Activated CD8-positive, alpha-beta T cell treated with anti-CD3 and anti-CD28 coated beads, Interleukin-2, amount 10 ng/mL, durations not matched to agents 7 days and 5 days (primary cell): ENCODE measurements at regions of chr2 and their contacts with region 1.

Region 1: DNA sequence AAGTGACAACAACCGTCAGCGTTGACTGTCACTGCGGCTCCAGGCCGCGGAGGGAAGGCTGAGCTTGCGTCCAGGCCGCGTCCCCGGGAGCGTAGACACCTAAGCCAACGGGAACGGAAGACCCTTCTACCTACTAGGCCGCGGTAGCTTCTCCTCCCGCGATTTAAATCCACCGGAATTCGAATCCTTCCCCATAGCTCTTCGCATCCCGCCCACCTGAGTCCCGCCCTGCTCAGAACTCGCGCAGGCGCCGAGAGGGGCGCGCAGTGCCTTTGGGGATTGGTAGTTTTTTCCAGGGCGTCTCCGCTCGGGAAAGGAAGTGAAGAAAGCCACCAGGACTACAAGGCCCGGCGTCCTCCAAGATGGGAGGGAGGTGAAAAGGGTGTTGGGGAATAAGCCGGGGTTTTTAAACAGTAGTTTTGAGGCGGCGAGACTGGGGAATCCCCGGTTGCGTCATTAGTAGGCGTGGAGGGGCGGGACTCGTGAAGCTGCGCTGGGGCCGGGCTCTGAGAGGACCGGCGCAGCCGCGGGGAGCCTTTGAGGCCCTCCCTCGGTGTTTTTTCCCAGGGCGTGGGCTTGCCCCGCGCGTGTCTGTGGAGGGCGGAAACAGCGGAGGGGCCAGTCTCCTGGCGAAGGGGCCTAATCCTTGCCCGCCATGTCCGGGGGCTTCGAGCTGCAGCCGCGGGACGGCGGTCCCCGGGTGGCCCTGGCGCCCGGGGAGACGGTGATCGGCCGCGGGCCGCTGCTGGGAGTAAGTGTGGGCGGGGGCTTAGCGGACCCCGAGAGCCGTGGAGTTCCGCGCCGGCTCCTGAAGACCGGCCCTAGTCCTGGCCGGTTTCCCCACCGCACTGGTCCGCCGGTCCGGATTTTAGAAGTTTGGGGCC is at the starts of genes APLF and FBXO48:
- DNase-seq: peak; percentile 99
- ATAC-seq: peak; percentile 94
- H3K4me3 Mint-ChIP-seq: peak within 1 kb of the TSS; percentile 98
- H3K27ac Mint-ChIP-seq: peak within 1 kb of the TSS; percentile 92
- H3K4me1 Mint-ChIP-seq: peaks cover 34% of the 10 kb centered on the region
- H3K27me3 Mint-ChIP-seq: peaks cover 2% of the 10 kb centered on the region
- total RNA-seq, gene APLF: 2.2 to 2.6 TPM
- total RNA-seq, gene FBXO48: 2.4 to 2.6 TPM

Region 2: DNA sequence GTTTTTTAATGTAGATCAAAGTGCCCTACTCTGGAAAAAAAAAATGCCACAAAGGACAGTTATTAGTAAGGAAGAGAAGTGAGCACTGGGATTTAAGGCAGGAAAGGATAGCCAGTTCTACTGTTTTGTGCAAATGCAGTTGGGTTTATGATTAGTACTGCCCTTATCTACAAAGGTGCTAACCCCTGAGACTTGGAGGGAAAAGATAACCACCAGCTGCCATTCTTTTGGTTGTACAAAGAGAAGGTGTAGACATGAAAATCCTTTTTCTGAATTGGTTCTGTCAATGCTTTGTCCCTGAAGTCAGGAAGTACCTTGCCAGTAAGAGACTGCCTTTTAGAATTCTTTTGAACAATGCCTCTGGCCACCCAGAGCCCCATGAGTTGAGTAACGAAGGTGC is 11.4 kb after region 1 on chr2:
- CTCF ChIA-PET with region 1: interaction called, 15 read pairs
- POLR2A ChIA-PET with region 1: interaction called, 9 read pairs
- DNase-seq: no peak
- ATAC-seq: no peak
- H3K4me3 Mint-ChIP-seq: no peak overlapping the region
- H3K27ac Mint-ChIP-seq: no peak overlapping the region
- H3K4me1 Mint-ChIP-seq: no peaks in the 10 kb centered on the region
- H3K27me3 Mint-ChIP-seq: no peaks in the 10 kb centered on the region

Region 3: DNA sequence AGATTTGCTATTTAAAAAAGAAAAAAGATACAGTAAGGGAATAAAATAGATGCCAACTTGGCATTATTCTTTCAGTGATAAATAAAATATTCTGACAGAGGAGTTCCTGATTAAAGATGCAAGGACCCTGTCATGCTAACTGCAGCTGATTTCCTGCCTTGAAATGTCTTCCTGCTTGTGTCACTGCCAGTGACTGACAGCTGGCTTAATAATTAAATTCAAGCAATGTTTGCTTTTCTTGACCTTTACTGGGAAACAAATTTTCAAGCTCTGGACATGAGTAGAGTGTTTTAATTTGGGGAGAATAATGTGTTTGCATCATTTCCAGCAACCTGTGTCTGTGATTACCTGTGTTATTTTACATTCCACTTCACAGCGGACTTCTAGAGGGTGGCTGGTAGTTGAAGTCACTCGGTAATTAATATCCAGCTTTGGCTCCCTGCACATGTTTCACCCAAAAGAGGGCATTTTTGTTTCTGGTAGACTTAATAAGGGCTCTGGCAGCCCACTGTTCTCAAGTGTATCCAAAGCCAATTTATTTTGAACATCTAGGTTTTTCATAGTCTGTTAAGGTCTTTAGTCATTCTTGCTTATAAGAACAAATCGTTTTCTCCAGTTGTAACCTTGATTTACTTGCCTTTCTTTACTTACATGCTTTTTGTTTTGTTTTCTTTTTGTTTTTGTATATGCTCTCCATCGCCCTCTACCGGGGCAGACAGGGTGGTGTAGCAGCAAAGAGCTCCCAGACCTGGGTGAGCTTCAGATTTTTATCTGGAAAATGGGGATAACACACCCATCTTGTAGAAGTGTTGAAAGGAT is 127.6 kb after region 1 on chr2:
- CTCF ChIA-PET with region 1: interaction called, 74 read pairs
- POLR2A ChIA-PET with region 1: no interaction called
- DNase-seq: peak; percentile 71
- ATAC-seq: no peak
- H3K4me3 Mint-ChIP-seq: peak overlapping the region; percentile 3
- H3K27ac Mint-ChIP-seq: peak overlapping the region; percentile 4
- H3K4me1 Mint-ChIP-seq: peaks cover 13% of the 10 kb centered on the region
- H3K27me3 Mint-ChIP-seq: peaks cover 12% of the 10 kb centered on the region

Region 4: GRCh38 chr2:68715353-68716041 is 248.2 kb after region 1 on chr2:
- CTCF ChIA-PET with region 1: interaction called, 69 read pairs
- POLR2A ChIA-PET with region 1: interaction called, 3 read pairs
- DNase-seq: peak; percentile 39
- ATAC-seq: no peak
- H3K4me3 Mint-ChIP-seq: no peak overlapping the region
- H3K27ac Mint-ChIP-seq: peak overlapping the region; percentile 85
- H3K4me1 Mint-ChIP-seq: peaks cover 82% of the 10 kb centered on the region
- H3K27me3 Mint-ChIP-seq: peaks cover 3% of the 10 kb centered on the region

Region 5: GRCh38 chr2:68742626-68743415 is 275.5 kb after region 1 on chr2:
- CTCF ChIA-PET with region 1: interaction called, 16 read pairs
- POLR2A ChIA-PET with region 1: no interaction called
- DNase-seq: peak; percentile 23
- ATAC-seq: no peak
- H3K4me3 Mint-ChIP-seq: no peak overlapping the region
- H3K27ac Mint-ChIP-seq: peak overlapping the region; percentile 12
- H3K4me1 Mint-ChIP-seq: peaks cover 93% of the 10 kb centered on the region
- H3K27me3 Mint-ChIP-seq: no peaks in the 10 kb centered on the region